ENCODE measurements at regions of chr19 and their contacts with region 1.

Region 1: GRCh38 chr19:36054119-36054732 is at the start of gene THAP8:
- DNase-seq: peak; percentile 100
- ATAC-seq: peak; percentile 82
- H3K4me3 ChIP-seq: peak within 1 kb of the TSS; percentile 63 to 90 (median 65)
- H3K4me3 Mint-ChIP-seq: peak within 1 kb of the TSS; percentile 98
- H3K27ac ChIP-seq: peak within 1 kb of the TSS; percentile 86 to 98
- H3K27ac Mint-ChIP-seq: peak within 1 kb of the TSS; percentile 94
- H3K4me1 ChIP-seq: peaks cover 9 to 18% of the 10 kb centered on the region in 2 donors
- H3K4me1 Mint-ChIP-seq: peaks cover 18% of the 10 kb centered on the region
- H3K27me3 ChIP-seq: no peaks in the 10 kb centered on the region
- H3K27me3 Mint-ChIP-seq: no peaks in the 10 kb centered on the region
- CTCF ChIP-seq: peak; percentile 72
- total RNA-seq, gene THAP8: 3.9 and 4.5 TPM in 2 replicates

Region 2: GRCh38 chr19:35693830-35694599 is 360.2 kb before region 1 on chr19:
- CTCF ChIA-PET with region 1: no interaction called
- POLR2A ChIA-PET with region 1: no interaction called
- intact Hi-C with region 1: loop called (anchors 1 kb)
- DNase-seq: peak; percentile 92
- ATAC-seq: peak; percentile 100
- H3K4me3 ChIP-seq: no peak overlapping the region
- H3K4me3 Mint-ChIP-seq: no peak overlapping the region
- H3K27ac ChIP-seq: no peak overlapping the region
- H3K27ac Mint-ChIP-seq: no peak overlapping the region
- H3K4me1 ChIP-seq: no peaks in the 10 kb centered on the region
- H3K4me1 Mint-ChIP-seq: no peaks in the 10 kb centered on the region
- H3K27me3 ChIP-seq: no peaks in the 10 kb centered on the region
- H3K27me3 Mint-ChIP-seq: no peaks in the 10 kb centered on the region
- CTCF ChIP-seq: peak; percentile 99

Region 3: GRCh38 chr19:35748106-35749020 is 305.9 kb before region 1 on chr19 and contains the start of gene LIN37:
- CTCF ChIA-PET with region 1: no interaction called
- POLR2A ChIA-PET with region 1: no interaction called
- intact Hi-C with region 1: loop called (anchors 2 kb)
- DNase-seq: peak; percentile 99
- ATAC-seq: peak; percentile 71
- H3K4me3 ChIP-seq: peak within 1 kb of the TSS; percentile 65 to 99 (median 74)
- H3K4me3 Mint-ChIP-seq: peak within 1 kb of the TSS; percentile 99
- H3K27ac ChIP-seq: peak within 1 kb of the TSS; percentile 63 to 92
- H3K27ac Mint-ChIP-seq: peak within 1 kb of the TSS; percentile 97
- H3K4me1 ChIP-seq: peaks cover 30 to 38% of the 10 kb centered on the region in 2 donors
- H3K4me1 Mint-ChIP-seq: peaks cover 49% of the 10 kb centered on the region
- H3K27me3 ChIP-seq: no peaks in the 10 kb centered on the region
- H3K27me3 Mint-ChIP-seq: no peaks in the 10 kb centered on the region
- CTCF ChIP-seq: no peak
- total RNA-seq, gene LIN37: 22.3 and 22.8 TPM in 2 replicates

Region 4: GRCh38 chr19:35899547-35900214 is 154.5 kb before region 1 on chr19:
- CTCF ChIA-PET with region 1: no interaction called
- POLR2A ChIA-PET with region 1: no interaction called
- intact Hi-C with region 1: loop called (anchors 2 kb)
- DNase-seq: peak; percentile 98
- ATAC-seq: peak; percentile 57
- H3K4me3 ChIP-seq: peak overlapping the region; percentile 74 to 100 (median 91)
- H3K4me3 Mint-ChIP-seq: peak overlapping the region; percentile 94
- H3K27ac ChIP-seq: peak overlapping the region; percentile 100
- H3K27ac Mint-ChIP-seq: peak overlapping the region; percentile 98
- H3K4me1 ChIP-seq: peaks cover 53 to 69% of the 10 kb centered on the region in 2 donors
- H3K4me1 Mint-ChIP-seq: peaks cover 64% of the 10 kb centered on the region
- H3K27me3 ChIP-seq: no peaks in the 10 kb centered on the region
- H3K27me3 Mint-ChIP-seq: no peaks in the 10 kb centered on the region
- CTCF ChIP-seq: no peak

Region 5: DNA sequence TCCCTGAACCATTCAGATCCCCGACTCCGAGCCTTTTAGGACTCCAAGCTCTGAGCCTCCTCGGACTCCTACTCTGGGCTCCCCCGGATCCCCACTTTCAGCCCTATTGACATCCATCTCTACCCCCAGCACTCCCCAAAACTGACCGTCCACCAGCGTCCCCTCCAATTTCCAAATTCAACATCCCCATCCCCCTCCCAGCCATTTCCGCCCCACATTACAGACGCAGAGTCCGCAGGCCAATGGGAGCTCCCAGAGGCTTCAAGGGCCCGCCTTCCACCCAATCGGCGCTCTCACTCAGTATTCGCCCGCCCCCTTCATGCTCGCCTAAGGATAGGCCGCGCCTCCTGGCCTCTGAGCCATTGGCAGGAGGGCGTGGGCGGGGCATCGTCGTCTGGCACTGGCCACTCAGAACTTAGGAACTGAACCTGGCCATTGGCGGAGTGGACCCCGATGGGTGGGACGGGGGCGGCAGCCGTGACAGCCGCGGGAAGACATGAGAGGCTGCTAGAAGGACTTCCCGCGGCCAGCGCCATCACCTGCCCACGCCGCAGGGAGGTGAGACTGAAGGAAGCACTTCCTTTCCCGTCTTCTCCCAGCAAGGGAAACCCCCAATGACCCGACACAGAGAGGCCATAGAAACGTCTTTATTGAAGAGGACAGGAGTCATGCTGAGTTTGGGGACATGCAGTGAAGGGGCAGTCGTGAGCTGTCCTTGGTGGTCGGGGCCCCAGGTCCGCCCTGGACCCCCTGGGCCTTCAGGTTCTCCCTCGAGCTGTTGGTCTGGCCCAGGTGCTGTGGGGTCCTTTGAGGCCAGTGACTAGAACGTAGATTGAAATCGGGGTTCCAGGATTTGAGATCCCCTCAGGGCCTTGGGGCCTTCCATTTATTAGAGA is 39.9 kb before region 1 on chr19 and contains the start of gene ALKBH6:
- CTCF ChIA-PET with region 1: no interaction called
- POLR2A ChIA-PET with region 1: interaction called, 9 read pairs
- intact Hi-C with region 1: loop called (anchors 1 kb)
- DNase-seq: peak; percentile 98
- ATAC-seq: peak; percentile 99
- H3K4me3 ChIP-seq: peak within 1 kb of the TSS; percentile 67 to 94 (median 72)
- H3K4me3 Mint-ChIP-seq: peak within 1 kb of the TSS; percentile 99
- H3K27ac ChIP-seq: peak within 1 kb of the TSS; percentile 70 to 86
- H3K27ac Mint-ChIP-seq: peak within 1 kb of the TSS; percentile 93
- H3K4me1 ChIP-seq: peaks cover 16 to 21% of the 10 kb centered on the region in 2 donors
- H3K4me1 Mint-ChIP-seq: peaks cover 28% of the 10 kb centered on the region
- H3K27me3 ChIP-seq: peaks cover 0 to 6% (median 0%) of the 10 kb centered on the region in 4 experiments
- H3K27me3 Mint-ChIP-seq: no peaks in the 10 kb centered on the region
- CTCF ChIP-seq: no peak
- total RNA-seq, gene ALKBH6: 49.4 and 54.5 TPM in 2 replicates

Region 6: GRCh38 chr19:36093146-36093662 is 39.0 kb after region 1 on chr19:
- CTCF ChIA-PET with region 1: no interaction called
- POLR2A ChIA-PET with region 1: no interaction called
- intact Hi-C with region 1: no loop called
- DNase-seq: no peak
- ATAC-seq: no peak
- H3K4me3 ChIP-seq: no peak overlapping the region
- H3K4me3 Mint-ChIP-seq: no peak overlapping the region
- H3K27ac ChIP-seq: no peak overlapping the region
- H3K27ac Mint-ChIP-seq: no peak overlapping the region
- H3K4me1 ChIP-seq: no peaks in the 10 kb centered on the region
- H3K4me1 Mint-ChIP-seq: no peaks in the 10 kb centered on the region
- H3K27me3 ChIP-seq: no peaks in the 10 kb centered on the region
- H3K27me3 Mint-ChIP-seq: no peaks in the 10 kb centered on the region
- CTCF ChIP-seq: no peak

Region 7: GRCh38 chr19:36132489-36132891 is 78.3 kb after region 1 on chr19:
- CTCF ChIA-PET with region 1: interaction called, 5 read pairs
- POLR2A ChIA-PET with region 1: no interaction called
- intact Hi-C with region 1: loop called (anchors 2 kb)
- DNase-seq: no peak
- ATAC-seq: no peak
- H3K4me3 ChIP-seq: no peak overlapping the region
- H3K4me3 Mint-ChIP-seq: no peak overlapping the region
- H3K27ac ChIP-seq: no peak overlapping the region
- H3K27ac Mint-ChIP-seq: no peak overlapping the region
- H3K4me1 ChIP-seq: peaks cover 7 to 28% of the 10 kb centered on the region in 2 donors
- H3K4me1 Mint-ChIP-seq: peaks cover 15% of the 10 kb centered on the region
- H3K27me3 ChIP-seq: no peaks in the 10 kb centered on the region
- H3K27me3 Mint-ChIP-seq: no peaks in the 10 kb centered on the region
- CTCF ChIP-seq: no peak

Region 8: GRCh38 chr19:36214386-36215275 is 160.4 kb after region 1 on chr19 and contains the starts of genes ZNF146 and ZNF565:
- CTCF ChIA-PET with region 1: no interaction called
- POLR2A ChIA-PET with region 1: interaction called, 5 read pairs
- intact Hi-C with region 1: loop called (anchors 1 kb)
- DNase-seq: peak; percentile 98
- ATAC-seq: peak; percentile 89
- H3K4me3 ChIP-seq: peak within 1 kb of the TSS; percentile 70 to 99 (median 85)
- H3K4me3 Mint-ChIP-seq: no peak within 1 kb of the TSS
- H3K27ac ChIP-seq: peak within 1 kb of the TSS; percentile 87 to 97
- H3K27ac Mint-ChIP-seq: peak within 1 kb of the TSS; percentile 41
- H3K4me1 ChIP-seq: peaks cover 13 to 21% of the 10 kb centered on the region in 2 donors
- H3K4me1 Mint-ChIP-seq: peaks cover 19% of the 10 kb centered on the region
- H3K27me3 ChIP-seq: no peaks in the 10 kb centered on the region
- H3K27me3 Mint-ChIP-seq: no peaks in the 10 kb centered on the region
- CTCF ChIP-seq: no peak
- total RNA-seq, gene ZNF146: 62.2 and 69.3 TPM in 2 replicates
- total RNA-seq, gene ZNF565: 5.2 and 5.5 TPM in 2 replicates

Measured in B cell (primary cell).